Calu3 (cell line): ENCODE measurements at regions of chr6 and their contacts with region 1.

Region 1: GRCh38 chr6:20467437-20467836 is 65.8 kb downstream of the E2F3 start:
- DNase-seq: no peak
- H3K4me3 Mint-ChIP-seq: no peak overlapping the region
- H3K27ac Mint-ChIP-seq: no peak overlapping the region
- H3K4me1 Mint-ChIP-seq: peaks cover 6% of the 10 kb centered on the region
- H3K27me3 Mint-ChIP-seq: no peaks in the 10 kb centered on the region
- CTCF ChIP-seq: no peak

Region 2: DNA sequence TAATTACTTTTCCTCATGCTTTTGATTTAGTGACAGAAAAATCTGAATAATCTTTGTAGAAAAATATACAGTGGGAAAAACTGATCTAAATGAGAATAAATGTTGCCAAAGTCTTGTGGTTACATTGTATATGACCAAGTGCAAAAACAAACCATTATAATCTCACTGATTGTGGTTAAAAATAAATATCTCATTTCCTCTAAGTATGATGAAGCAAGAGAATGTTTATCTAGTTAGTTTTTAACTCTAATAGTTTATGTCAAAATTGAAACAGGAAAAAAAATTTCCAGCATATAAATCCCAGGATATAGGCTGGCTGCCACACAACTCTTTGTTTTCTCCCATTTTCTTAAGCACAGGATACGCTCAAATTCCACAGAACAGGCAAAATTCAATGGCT is 1023.0 kb before region 1 on chr6:
- CTCF ChIA-PET with region 1: interaction called, 11 read pairs
- intact Hi-C with region 1: no loop called
- DNase-seq: no peak
- H3K4me3 Mint-ChIP-seq: no peak overlapping the region
- H3K27ac Mint-ChIP-seq: no peak overlapping the region
- H3K4me1 Mint-ChIP-seq: peaks cover 22% of the 10 kb centered on the region
- H3K27me3 Mint-ChIP-seq: no peaks in the 10 kb centered on the region
- CTCF ChIP-seq: no peak

Region 3: DNA sequence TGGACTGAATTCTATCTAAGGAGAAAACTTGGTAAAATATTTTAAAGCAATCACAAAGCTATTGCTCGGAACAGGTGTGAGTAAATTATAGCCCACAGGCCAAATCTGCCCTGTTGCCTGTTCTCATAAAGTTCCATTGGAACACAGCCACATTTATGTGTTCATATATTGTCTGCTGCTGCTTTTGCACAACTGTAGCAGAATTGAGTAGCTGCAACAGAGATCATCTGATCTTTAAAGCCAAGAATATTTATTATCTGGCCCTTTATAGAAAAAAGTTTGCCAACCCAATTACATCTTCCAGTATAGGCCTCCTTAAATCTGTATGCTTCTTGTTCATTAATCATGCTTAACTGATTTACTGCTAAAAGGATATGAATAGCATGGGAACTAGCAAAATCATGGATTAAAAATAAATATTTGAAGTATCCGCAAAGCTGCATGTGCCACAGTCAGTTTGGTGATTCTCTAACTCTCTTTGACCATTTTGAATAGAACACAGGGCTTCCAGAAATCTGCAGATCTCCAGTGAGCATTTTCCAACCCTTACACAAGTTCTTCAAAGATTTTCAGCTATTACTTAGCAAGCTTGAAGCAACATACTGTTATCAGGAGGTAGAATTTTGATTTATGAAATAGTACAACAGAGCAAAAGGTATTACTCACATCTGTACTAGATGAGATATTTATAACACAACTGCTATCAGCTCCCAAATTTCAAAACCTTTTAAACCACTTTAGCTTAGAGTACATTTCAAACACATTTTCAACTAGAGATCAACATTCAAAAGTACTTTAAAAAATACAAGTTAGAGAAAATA is 942.9 kb before region 1 on chr6:
- CTCF ChIA-PET with region 1: no interaction called
- intact Hi-C with region 1: no loop called
- DNase-seq: no peak
- H3K4me3 Mint-ChIP-seq: no peak overlapping the region
- H3K27ac Mint-ChIP-seq: no peak overlapping the region
- H3K4me1 Mint-ChIP-seq: no peaks in the 10 kb centered on the region
- H3K27me3 Mint-ChIP-seq: no peaks in the 10 kb centered on the region
- CTCF ChIP-seq: no peak

Region 4: GRCh38 chr6:20589266-20589665 is 121.8 kb after region 1 on chr6:
- CTCF ChIA-PET with region 1: no interaction called
- intact Hi-C with region 1: no loop called
- DNase-seq: peak; percentile 8
- H3K4me3 Mint-ChIP-seq: no peak overlapping the region
- H3K27ac Mint-ChIP-seq: peak overlapping the region; percentile 23
- H3K4me1 Mint-ChIP-seq: no peaks in the 10 kb centered on the region
- H3K27me3 Mint-ChIP-seq: no peaks in the 10 kb centered on the region
- CTCF ChIP-seq: no peak